Transverse colon (tissue), 4 donors: ENCODE measurements at regions of chr11 and their contacts with region 1.

Region 1: GRCh38 chr11:36746886-36747710 is 149.1 kb upstream of the RAG2 start:
- DNase-seq: peak; percentile 91
- H3K4me3 ChIP-seq: no peak overlapping the region
- H3K27ac ChIP-seq: no peak overlapping the region
- H3K4me1 ChIP-seq: no peaks in the 10 kb centered on the region
- H3K27me3 ChIP-seq: peaks cover 6% of the 10 kb centered on the region
- CTCF ChIP-seq: peak; percentile 96 to 99 (median 96)
- EP300 ChIP-seq: no peak
- POLR2A ChIP-seq: no peak

Region 2: DNA sequence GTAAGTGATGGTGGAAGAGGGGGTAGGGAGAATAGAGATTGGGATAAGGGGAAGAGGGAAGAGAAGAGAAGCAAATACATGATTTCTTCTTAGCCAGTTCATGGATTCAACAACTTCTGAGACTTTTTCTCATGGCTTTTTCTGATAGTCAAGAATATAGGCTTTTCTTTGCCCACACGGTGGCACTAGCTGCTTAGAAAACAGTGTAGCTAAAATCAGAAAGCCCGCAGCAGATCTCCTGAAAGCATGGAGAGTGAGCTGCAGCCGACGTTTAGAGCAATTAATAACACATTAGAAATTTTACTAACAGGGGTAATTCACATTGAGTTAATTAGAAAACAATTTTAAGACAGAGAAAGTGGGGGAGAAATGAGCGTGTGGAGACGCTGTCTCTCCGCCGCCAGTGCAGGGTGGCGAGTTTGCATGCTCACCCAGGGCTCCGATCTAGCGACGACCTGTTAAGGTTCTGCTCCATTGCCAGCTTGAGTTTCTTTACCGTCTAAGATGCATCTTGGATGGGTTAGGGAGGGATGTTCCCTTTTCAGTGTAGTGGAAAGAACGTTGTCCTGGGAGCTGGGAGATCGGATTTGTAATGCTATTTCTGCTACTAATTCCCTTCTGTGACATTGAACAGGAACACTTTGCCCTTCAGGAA is 182.6 kb before region 1 on chr11:
- in situ Hi-C with region 1: loop called in 2 of 4 experiments (anchors 10 kb)
- intact Hi-C with region 1: no loop called
- DNase-seq: peak; percentile 47
- H3K4me3 ChIP-seq: peak overlapping the region; percentile 5 to 45 (median 22)
- H3K27ac ChIP-seq: no peak overlapping the region
- H3K4me1 ChIP-seq: peaks cover 0 to 5% (median 3%) of the 10 kb centered on the region in 4 donors
- H3K27me3 ChIP-seq: no peaks in the 10 kb centered on the region
- CTCF ChIP-seq: peak; percentile 55 to 66 (median 63)
- EP300 ChIP-seq: no peak
- POLR2A ChIP-seq: no peak

Region 3: DNA sequence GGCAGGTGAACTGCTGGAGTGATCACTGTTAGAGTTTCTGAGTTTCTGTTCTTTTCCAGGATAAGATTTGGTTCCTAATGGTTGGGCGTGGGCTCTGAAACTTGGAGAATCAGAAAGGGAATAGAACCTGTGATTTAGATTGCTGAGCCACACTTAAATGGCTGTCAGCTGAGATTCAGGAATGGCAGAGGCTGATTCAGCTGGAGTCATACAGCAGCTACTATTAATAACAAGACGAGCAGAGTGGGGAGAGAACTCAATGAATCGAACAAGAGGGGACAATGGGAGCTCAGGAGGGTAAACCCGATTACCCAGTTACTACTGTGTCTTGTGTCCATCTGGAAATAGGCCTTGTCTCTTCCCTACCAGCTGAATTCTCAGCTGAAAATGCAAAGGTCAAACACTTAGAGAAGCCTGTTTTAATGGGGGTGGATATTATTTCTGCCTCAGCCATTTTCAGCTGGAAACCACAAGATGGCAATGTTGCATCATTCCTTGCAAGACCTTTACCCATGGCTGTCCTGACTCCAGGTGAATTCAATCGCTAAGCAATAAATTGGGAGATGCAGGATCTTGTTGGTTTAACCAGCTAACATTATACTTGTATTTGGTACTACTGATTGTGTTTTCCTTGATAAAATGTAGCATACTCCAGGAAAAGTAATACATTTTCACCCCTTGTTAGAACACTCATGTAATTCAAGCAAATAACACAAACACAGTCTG is 44.6 kb before region 1 on chr11:
- in situ Hi-C with region 1: loop called in 1 of 4 experiments (anchors 10 kb)
- intact Hi-C with region 1: loop called (anchors 2 kb)
- DNase-seq: no peak
- H3K4me3 ChIP-seq: no peak overlapping the region
- H3K27ac ChIP-seq: no peak overlapping the region
- H3K4me1 ChIP-seq: peaks cover 0 to 12% (median 0%) of the 10 kb centered on the region in 4 donors
- H3K27me3 ChIP-seq: no peaks in the 10 kb centered on the region
- CTCF ChIP-seq: peak; percentile 57 to 80 (median 74)
- EP300 ChIP-seq: no peak
- POLR2A ChIP-seq: no peak